Activated CD4-positive, alpha-beta T cell treated with anti-CD3 and anti-CD28 coated beads, Interleukin-2, amount 10 ng/mL, durations not matched to agents 24 days and 14 days (primary cell): ENCODE measurements at regions of chr12 and their contacts with region 1.

Region 1: DNA sequence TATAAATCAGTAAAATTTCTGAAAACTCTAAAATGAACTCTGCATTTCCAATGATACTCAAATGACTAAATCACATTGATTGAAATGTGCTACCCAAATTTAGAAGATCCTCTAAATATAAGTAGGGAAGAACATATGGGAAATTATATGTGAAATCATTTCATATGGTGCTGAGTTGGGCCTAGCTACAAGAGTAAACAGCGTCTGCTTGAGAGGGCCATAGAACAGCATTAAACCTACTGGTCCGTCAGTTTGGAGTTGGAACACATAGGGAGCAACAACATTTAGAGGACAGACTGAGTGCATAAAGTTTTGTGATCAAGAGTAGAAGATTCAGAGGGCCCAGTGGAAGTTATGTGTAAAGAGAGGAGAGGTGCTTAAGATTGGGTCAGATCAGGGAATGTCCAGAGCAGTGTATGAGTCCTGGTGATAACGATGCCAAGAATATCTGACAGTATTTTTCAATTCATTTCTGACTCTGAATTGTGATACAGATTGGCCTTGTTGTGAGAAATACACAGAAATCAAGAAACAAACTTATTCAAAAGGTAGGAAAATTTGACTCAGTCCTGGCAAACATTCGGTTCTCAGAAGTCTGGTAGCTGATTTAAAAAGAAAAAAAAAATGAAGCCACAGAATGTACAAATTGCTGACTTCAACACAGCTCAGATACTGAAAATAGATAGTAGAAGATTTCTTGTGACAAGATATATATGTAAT is 362.2 kb downstream of the CCDC91 start:
- DNase-seq: no peak
- H3K4me3 Mint-ChIP-seq: no peak overlapping the region
- H3K27ac Mint-ChIP-seq: peak overlapping the region; percentile 43
- H3K4me1 Mint-ChIP-seq: peaks cover 7% of the 10 kb centered on the region
- H3K27me3 Mint-ChIP-seq: no peaks in the 10 kb centered on the region

Region 2: GRCh38 chr12:28497889-28498411 is 54.5 kb before region 1 on chr12:
- intact Hi-C with region 1: loop called (anchors 1 kb)
- DNase-seq: no peak
- H3K4me3 Mint-ChIP-seq: no peak overlapping the region
- H3K27ac Mint-ChIP-seq: peak overlapping the region; percentile 7
- H3K4me1 Mint-ChIP-seq: peaks cover 9% of the 10 kb centered on the region
- H3K27me3 Mint-ChIP-seq: no peaks in the 10 kb centered on the region

Region 3: DNA sequence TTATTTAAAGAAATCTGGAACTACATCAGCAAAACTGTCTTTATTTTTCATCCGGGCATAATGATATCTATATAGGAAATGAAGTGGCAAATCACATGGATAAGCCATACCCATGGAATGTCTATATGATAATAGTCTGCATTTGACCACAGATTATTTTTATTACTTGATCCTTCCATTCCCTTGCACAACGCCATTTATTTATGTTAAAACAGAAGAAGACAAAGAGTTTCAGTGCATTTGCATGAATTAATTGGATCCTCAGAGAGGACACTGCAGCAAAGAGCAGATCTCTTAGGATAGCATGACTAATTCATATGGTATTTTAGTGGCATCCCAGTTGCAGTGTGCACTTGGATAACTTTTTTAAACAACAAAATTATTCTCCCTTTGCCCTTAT is 17.2 kb before region 1 on chr12:
- intact Hi-C with region 1: loop called (anchors 1 kb)
- DNase-seq: no peak
- H3K4me3 Mint-ChIP-seq: no peak overlapping the region
- H3K27ac Mint-ChIP-seq: no peak overlapping the region
- H3K4me1 Mint-ChIP-seq: peaks cover 4% of the 10 kb centered on the region
- H3K27me3 Mint-ChIP-seq: no peaks in the 10 kb centered on the region